ENCODE measurements at regions of chr19 and their contacts with region 1.

Region 1: GRCh38 chr19:6279931-6280591 is at the start of gene MLLT1:
- DNase-seq: peak; percentile 95
- ATAC-seq: peak; percentile 95
- H3K4me3 Mint-ChIP-seq: peak within 1 kb of the TSS; percentile 88
- H3K27ac Mint-ChIP-seq: peak within 1 kb of the TSS; percentile 68
- H3K4me1 Mint-ChIP-seq: peaks cover 35% of the 10 kb centered on the region
- H3K27me3 Mint-ChIP-seq: no peaks in the 10 kb centered on the region
- CTCF ChIP-seq: peak; percentile 36
- total RNA-seq, gene MLLT1: 39.0 and 41.3 TPM in 2 replicates

Region 2: GRCh38 chr19:6199240-6199983 is 80.6 kb before region 1 on chr19:
- CTCF ChIA-PET with region 1: no interaction called
- POLR2A ChIA-PET with region 1: no interaction called
- intact Hi-C with region 1: loop called (anchors 1 kb)
- DNase-seq: peak; percentile 99
- ATAC-seq: peak; percentile 86
- H3K4me3 Mint-ChIP-seq: peak overlapping the region; percentile 95
- H3K27ac Mint-ChIP-seq: peak overlapping the region; percentile 85
- H3K4me1 Mint-ChIP-seq: peaks cover 33% of the 10 kb centered on the region
- H3K27me3 Mint-ChIP-seq: no peaks in the 10 kb centered on the region
- CTCF ChIP-seq: no peak

Region 3: DNA sequence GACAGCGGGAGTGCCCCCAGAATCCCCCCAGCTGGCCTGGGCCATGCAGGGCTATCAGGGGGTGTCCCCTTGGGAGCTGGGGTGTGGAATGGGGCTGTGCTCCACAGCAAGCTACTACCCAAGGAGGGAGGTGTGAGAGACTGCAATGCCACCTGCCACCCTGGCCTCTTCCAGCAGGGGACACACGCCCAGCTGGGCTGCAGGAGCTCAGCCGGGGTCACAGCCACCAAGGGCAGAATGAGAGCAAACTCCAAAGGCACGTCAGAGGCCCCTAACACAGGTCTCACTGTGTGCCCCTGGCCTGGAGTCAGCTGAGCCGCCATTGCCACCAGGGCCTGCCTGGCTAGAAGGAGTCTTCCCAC is 55.8 kb before region 1 on chr19:
- CTCF ChIA-PET with region 1: no interaction called
- POLR2A ChIA-PET with region 1: no interaction called
- intact Hi-C with region 1: no loop called
- DNase-seq: no peak
- ATAC-seq: no peak
- H3K4me3 Mint-ChIP-seq: no peak overlapping the region
- H3K27ac Mint-ChIP-seq: no peak overlapping the region
- H3K4me1 Mint-ChIP-seq: no peaks in the 10 kb centered on the region
- H3K27me3 Mint-ChIP-seq: no peaks in the 10 kb centered on the region
- CTCF ChIP-seq: no peak

Region 4: GRCh38 chr19:6241680-6242377 is 38.2 kb before region 1 on chr19:
- CTCF ChIA-PET with region 1: no interaction called
- POLR2A ChIA-PET with region 1: no interaction called
- intact Hi-C with region 1: loop called (anchors 5 kb)
- DNase-seq: no peak
- ATAC-seq: no peak
- H3K4me3 Mint-ChIP-seq: no peak overlapping the region
- H3K27ac Mint-ChIP-seq: no peak overlapping the region
- H3K4me1 Mint-ChIP-seq: peaks cover 34% of the 10 kb centered on the region
- H3K27me3 Mint-ChIP-seq: no peaks in the 10 kb centered on the region
- CTCF ChIP-seq: no peak

Region 5: GRCh38 chr19:6362027-6362350 is 81.9 kb after region 1 on chr19:
- CTCF ChIA-PET with region 1: no interaction called
- POLR2A ChIA-PET with region 1: no interaction called
- intact Hi-C with region 1: loop called (anchors 5 kb)
- DNase-seq: no peak
- ATAC-seq: no peak
- H3K4me3 Mint-ChIP-seq: peak overlapping the region; percentile 87
- H3K27ac Mint-ChIP-seq: peak overlapping the region; percentile 78
- H3K4me1 Mint-ChIP-seq: peaks cover 11% of the 10 kb centered on the region
- H3K27me3 Mint-ChIP-seq: no peaks in the 10 kb centered on the region
- CTCF ChIP-seq: no peak

Region 6: DNA sequence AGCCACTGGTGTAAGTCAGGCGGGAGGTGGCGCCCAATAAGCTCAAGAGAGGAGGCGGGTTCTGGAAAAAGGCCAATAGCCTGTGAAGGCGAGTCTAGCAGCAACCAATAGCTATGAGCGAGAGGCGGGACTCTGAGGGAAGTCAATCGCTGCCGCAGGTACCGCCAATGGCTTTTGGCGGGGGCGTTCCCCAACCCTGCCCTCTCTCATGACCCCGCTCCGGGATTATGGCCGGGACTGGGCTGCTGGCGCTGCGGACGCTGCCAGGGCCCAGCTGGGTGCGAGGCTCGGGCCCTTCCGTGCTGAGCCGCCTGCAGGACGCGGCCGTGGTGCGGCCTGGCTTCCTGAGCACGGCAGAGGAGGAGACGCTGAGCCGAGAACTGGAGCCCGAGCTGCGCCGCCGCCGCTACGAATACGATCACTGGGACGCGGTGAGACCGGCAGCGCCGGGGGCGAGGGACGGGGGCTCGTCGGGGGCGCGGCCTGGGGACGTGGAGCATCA is 92.6 kb after region 1 on chr19 and contains the start of gene ALKBH7:
- CTCF ChIA-PET with region 1: no interaction called
- POLR2A ChIA-PET with region 1: no interaction called
- intact Hi-C with region 1: no loop called
- DNase-seq: peak; percentile 84
- ATAC-seq: peak; percentile 74
- H3K4me3 Mint-ChIP-seq: peak within 1 kb of the TSS; percentile 92
- H3K27ac Mint-ChIP-seq: peak within 1 kb of the TSS; percentile 93
- H3K4me1 Mint-ChIP-seq: peaks cover 15% of the 10 kb centered on the region
- H3K27me3 Mint-ChIP-seq: no peaks in the 10 kb centered on the region
- CTCF ChIP-seq: no peak
- total RNA-seq, gene ALKBH7: 48.4 and 52.9 TPM in 2 replicates

Region 7: DNA sequence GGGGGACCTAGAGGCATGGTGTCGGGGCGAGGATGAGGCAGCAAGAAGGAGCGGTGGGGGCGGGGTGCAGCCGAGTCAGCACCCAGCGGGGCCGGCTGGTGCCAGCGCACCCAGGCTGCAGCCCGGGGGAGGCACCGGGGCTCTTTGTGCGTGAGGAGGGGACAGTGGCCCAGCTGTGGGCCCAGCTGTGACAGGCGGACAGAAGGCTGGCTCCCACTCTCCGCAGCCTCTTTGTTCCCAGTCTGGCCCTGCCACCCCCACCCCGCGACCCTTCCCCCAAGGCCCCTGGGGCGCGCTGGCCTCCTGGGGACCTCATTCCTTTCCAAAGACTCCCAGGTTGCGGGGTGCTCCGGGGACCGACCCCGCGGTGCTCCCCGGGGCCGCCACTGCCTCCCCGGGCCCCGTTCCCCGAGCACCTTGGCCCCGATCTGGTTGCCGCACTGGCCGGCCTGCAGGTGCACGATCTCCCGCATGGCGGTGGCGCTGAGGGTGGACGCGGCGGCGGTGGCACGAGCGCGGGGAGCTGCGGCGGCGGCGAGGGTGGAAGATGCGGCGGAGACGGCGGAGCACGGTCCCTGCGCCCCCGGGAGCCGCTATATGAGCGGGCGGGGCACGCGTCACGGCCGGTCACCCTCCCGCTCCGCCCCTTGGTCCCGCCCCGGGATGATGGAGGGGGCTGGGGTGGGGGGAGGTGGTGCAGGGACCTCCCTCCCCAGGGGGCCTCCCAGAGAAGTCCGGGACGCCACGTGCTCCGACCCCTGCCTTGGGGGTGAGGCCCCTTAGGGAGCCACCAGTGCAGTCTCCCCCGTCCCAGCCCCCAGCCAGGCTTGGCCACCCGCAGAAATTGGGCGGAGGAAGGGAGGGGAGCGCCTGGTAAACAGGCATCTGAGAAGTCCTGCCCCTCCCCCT is 221.9 kb after region 1 on chr19 and contains the start of gene TUBB4A:
- CTCF ChIA-PET with region 1: no interaction called
- POLR2A ChIA-PET with region 1: no interaction called
- intact Hi-C with region 1: loop called (anchors 1 kb)
- DNase-seq: peak; percentile 65
- ATAC-seq: peak; percentile 78
- H3K4me3 Mint-ChIP-seq: peak within 1 kb of the TSS; percentile 87
- H3K27ac Mint-ChIP-seq: no peak within 1 kb of the TSS
- H3K4me1 Mint-ChIP-seq: peaks cover 23% of the 10 kb centered on the region
- H3K27me3 Mint-ChIP-seq: peaks cover 4% of the 10 kb centered on the region
- CTCF ChIP-seq: no peak
- total RNA-seq, gene TUBB4A: 13.2 and 16.8 TPM in 2 replicates

Region 8: GRCh38 chr19:6753178-6754031 is 473.3 kb after region 1 on chr19:
- CTCF ChIA-PET with region 1: no interaction called
- POLR2A ChIA-PET with region 1: no interaction called
- intact Hi-C with region 1: loop called (anchors 5 kb)
- DNase-seq: peak; percentile 91
- ATAC-seq: peak; percentile 93
- H3K4me3 Mint-ChIP-seq: peak overlapping the region; percentile 87
- H3K27ac Mint-ChIP-seq: peak overlapping the region; percentile 82
- H3K4me1 Mint-ChIP-seq: peaks cover 33% of the 10 kb centered on the region
- H3K27me3 Mint-ChIP-seq: no peaks in the 10 kb centered on the region
- CTCF ChIP-seq: no peak

Measured in activated B cell treated with CpG ODN at 0.5 μM for 24 hours (primary cell).